Naive thymus-derived CD4-positive, alpha-beta T cell (primary cell): ENCODE measurements at regions of chr5 and their contacts with region 1.

Region 1: GRCh38 chr5:74648835-74649293 is 8.3 kb upstream of the ENC1 start:
- DNase-seq: peak in 8 of 9 donors; percentile 22 to 64 (median 52)
- ATAC-seq: peak; percentile 89
- H3K4me3 ChIP-seq: no peak overlapping the region
- H3K4me3 Mint-ChIP-seq: no peak overlapping the region
- H3K27ac ChIP-seq: no peak overlapping the region
- H3K27ac Mint-ChIP-seq: no peak overlapping the region
- H3K4me1 ChIP-seq: no peaks in the 10 kb centered on the region
- H3K4me1 Mint-ChIP-seq: peaks cover 0 to 7% (median 0%) of the 10 kb centered on the region in 7 donors
- H3K27me3 ChIP-seq: no peaks in the 10 kb centered on the region
- H3K27me3 Mint-ChIP-seq: peaks cover 0 to 36% (median 5%) of the 10 kb centered on the region in 5 donors

Region 2: GRCh38 chr5:73902327-73903051 is 746.4 kb before region 1 on chr5:
- CTCF ChIA-PET with region 1: interaction called, 22 read pairs
- POLR2A ChIA-PET with region 1: interaction called, 3 read pairs
- intact Hi-C with region 1: loop called (anchors 1 kb)
- DNase-seq: peak in 7 of 9 donors; percentile 10 to 56 (median 51)
- ATAC-seq: no peak
- H3K4me3 ChIP-seq: no peak overlapping the region
- H3K4me3 Mint-ChIP-seq: no peak overlapping the region
- H3K27ac ChIP-seq: no peak overlapping the region
- H3K27ac Mint-ChIP-seq: no peak overlapping the region
- H3K4me1 ChIP-seq: no peaks in the 10 kb centered on the region
- H3K4me1 Mint-ChIP-seq: peaks cover 0 to 5% (median 0%) of the 10 kb centered on the region in 7 donors
- H3K27me3 ChIP-seq: no peaks in the 10 kb centered on the region
- H3K27me3 Mint-ChIP-seq: peaks cover 9 to 35% (median 29%) of the 10 kb centered on the region in 5 donors

Region 3: DNA sequence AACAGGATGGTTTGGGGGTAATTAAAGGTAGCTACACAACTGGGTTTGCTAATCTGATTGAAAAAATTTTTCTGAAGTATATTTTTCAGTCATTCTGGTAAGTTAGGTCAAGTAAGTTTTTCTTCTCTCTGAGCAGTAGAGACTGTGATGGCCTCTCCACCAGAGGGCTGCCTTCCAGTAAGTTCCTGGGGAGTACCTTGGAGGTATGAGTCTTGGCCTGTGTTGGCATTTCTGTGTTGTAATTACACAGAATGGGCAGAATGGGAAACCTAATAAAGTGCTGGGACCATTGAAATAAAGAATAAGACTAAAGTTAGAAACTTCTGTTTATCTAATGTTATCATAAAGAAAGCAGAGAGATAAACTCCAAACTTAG is 592.1 kb before region 1 on chr5:
- CTCF ChIA-PET with region 1: no interaction called
- POLR2A ChIA-PET with region 1: no interaction called
- intact Hi-C with region 1: loop called in 1 of 2 experiments (anchors 2 kb)
- DNase-seq: no peak
- ATAC-seq: no peak
- H3K4me3 ChIP-seq: no peak overlapping the region
- H3K4me3 Mint-ChIP-seq: no peak overlapping the region
- H3K27ac ChIP-seq: no peak overlapping the region
- H3K27ac Mint-ChIP-seq: no peak overlapping the region
- H3K4me1 ChIP-seq: no peaks in the 10 kb centered on the region
- H3K4me1 Mint-ChIP-seq: no peaks in the 10 kb centered on the region
- H3K27me3 ChIP-seq: no peaks in the 10 kb centered on the region
- H3K27me3 Mint-ChIP-seq: peaks cover 5 to 28% (median 19%) of the 10 kb centered on the region in 5 donors